ENCODE measurements at regions of chr3 and their contacts with region 1.

Region 1: GRCh38 chr3:109396806-109397205 is 59.5 kb upstream of the DPPA4 start:
- DNase-seq: no peak
- ATAC-seq: no peak
- H3K4me3 Mint-ChIP-seq: no peak overlapping the region
- H3K27ac Mint-ChIP-seq: no peak overlapping the region
- H3K4me1 Mint-ChIP-seq: peaks cover 29% of the 10 kb centered on the region
- H3K27me3 Mint-ChIP-seq: no peaks in the 10 kb centered on the region
- CTCF ChIP-seq: no peak

Region 2: DNA sequence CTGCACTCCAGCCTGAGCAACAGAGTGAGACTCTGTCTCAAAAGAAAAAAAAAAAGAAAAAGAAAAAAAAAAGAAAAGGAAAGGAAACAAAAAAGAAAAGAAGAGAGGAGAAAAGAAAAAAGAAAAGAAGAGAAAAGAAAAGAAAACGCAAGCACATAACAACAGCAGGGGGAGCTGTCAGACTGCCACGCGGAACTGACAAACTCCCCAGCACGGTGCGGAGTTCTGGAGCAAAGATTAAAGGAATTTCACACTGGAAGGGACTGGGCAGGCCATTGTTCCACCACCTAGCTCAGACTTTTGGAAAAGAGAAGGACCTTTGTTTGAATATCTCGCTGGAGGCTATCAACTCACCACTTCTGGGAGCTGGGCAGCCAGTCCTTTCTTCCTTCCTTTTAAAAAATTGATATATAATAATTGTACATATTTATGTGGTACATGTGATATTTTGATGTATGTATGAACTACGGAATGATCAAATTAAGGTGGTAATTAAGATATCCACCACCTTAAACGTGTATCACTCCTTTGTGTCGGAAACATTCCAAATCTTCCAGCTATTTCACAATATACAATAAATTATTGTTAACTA is 121.0 kb before region 1 on chr3:
- CTCF ChIA-PET with region 1: interaction called, 59 read pairs
- POLR2A ChIA-PET with region 1: no interaction called
- DNase-seq: peak; percentile 64
- ATAC-seq: peak; percentile 94
- H3K4me3 Mint-ChIP-seq: no peak overlapping the region
- H3K27ac Mint-ChIP-seq: no peak overlapping the region
- H3K4me1 Mint-ChIP-seq: peaks cover 24% of the 10 kb centered on the region
- H3K27me3 Mint-ChIP-seq: no peaks in the 10 kb centered on the region
- CTCF ChIP-seq: peak; percentile 67

Region 3: GRCh38 chr3:109284071-109284470 is 112.7 kb before region 1 on chr3:
- CTCF ChIA-PET with region 1: interaction called, 13 read pairs
- POLR2A ChIA-PET with region 1: interaction called, 3 read pairs
- DNase-seq: no peak
- ATAC-seq: no peak
- H3K4me3 Mint-ChIP-seq: no peak overlapping the region
- H3K27ac Mint-ChIP-seq: no peak overlapping the region
- H3K4me1 Mint-ChIP-seq: peaks cover 18% of the 10 kb centered on the region
- H3K27me3 Mint-ChIP-seq: no peaks in the 10 kb centered on the region
- CTCF ChIP-seq: no peak

Region 4: GRCh38 chr3:109355625-109356441 is 41.0 kb before region 1 on chr3:
- CTCF ChIA-PET with region 1: interaction called, 12 read pairs
- POLR2A ChIA-PET with region 1: no interaction called
- DNase-seq: peak; percentile 71
- ATAC-seq: peak; percentile 83
- H3K4me3 Mint-ChIP-seq: peak overlapping the region; percentile 68
- H3K27ac Mint-ChIP-seq: peak overlapping the region; percentile 99
- H3K4me1 Mint-ChIP-seq: peaks cover 67% of the 10 kb centered on the region
- H3K27me3 Mint-ChIP-seq: no peaks in the 10 kb centered on the region
- CTCF ChIP-seq: no peak

Region 5: DNA sequence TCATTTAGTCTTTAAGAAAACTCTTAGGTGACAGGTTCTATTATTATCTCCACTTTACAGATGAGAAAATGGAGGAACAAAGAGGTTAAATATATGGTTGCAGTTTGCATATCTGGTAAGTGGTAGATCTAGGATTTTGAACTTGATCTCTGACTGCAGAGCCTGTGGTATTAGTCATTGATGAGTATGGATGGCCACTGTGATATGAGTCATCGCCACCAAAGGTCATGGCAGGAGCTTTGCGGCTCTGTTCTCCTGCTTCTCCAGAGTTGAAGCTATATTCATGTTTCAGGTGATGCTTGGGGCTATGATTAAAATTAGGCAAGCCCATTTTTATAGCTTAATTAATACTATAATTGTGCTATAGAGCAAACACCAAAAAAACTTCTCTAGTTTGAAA is 246.8 kb after region 1 on chr3:
- CTCF ChIA-PET with region 1: no interaction called
- POLR2A ChIA-PET with region 1: no interaction called
- DNase-seq: no peak
- ATAC-seq: no peak
- H3K4me3 Mint-ChIP-seq: no peak overlapping the region
- H3K27ac Mint-ChIP-seq: no peak overlapping the region
- H3K4me1 Mint-ChIP-seq: peaks cover 4% of the 10 kb centered on the region
- H3K27me3 Mint-ChIP-seq: no peaks in the 10 kb centered on the region
- CTCF ChIP-seq: no peak